PC-3 (cell line): ENCODE measurements at regions of chr20 and their contacts with region 1.

Region 1: DNA sequence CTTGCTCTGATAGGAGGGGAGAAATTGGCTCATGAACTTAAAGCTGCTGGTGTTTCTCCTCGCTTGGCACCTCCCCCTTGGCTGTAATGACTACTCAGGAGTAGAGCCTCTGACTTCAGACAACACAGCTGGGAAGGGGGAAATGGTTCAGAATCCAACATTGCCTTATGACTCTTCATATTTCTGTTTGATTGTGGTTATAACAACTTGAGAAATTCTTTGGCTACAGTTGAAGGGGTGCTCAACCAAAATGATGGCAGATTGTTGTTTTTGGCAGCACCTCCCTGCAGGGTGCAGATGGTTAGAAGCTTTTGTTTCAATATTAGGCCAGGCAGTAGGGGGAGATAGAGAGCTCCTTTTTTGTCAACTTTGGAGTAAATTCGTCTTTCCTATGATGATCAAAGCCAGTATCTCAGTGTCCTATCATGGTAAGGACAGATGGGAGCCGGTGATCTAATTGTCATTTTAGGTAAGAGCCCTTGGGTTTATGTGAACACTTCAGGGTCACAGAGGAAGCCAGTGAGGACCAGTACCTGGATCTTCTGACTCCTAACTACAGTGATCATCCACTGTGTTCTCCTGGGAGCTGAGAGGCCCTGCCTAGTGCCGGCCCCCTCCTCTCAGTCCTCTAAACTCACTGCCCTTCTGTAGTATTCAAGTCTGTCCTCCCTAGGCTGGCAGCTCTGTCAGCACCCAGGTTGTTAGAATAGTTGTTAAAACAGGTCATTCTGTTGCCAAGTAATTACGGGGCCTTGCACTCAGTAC is 39.9 kb downstream of the RPRD1B start:
- DNase-seq: peak; percentile 93
- ATAC-seq: peak; percentile 82
- H3K4me3 ChIP-seq: no peak overlapping the region
- H3K27ac ChIP-seq: 0 out of 2 replicates have a peak overlapping the region, but pooled peaks have one; percentile 7
- H3K4me1 ChIP-seq: peaks cover 37% of the 10 kb centered on the region
- H3K27me3 ChIP-seq: no peaks in the 10 kb centered on the region
- CTCF ChIP-seq: peak; percentile 93

Region 2: DNA sequence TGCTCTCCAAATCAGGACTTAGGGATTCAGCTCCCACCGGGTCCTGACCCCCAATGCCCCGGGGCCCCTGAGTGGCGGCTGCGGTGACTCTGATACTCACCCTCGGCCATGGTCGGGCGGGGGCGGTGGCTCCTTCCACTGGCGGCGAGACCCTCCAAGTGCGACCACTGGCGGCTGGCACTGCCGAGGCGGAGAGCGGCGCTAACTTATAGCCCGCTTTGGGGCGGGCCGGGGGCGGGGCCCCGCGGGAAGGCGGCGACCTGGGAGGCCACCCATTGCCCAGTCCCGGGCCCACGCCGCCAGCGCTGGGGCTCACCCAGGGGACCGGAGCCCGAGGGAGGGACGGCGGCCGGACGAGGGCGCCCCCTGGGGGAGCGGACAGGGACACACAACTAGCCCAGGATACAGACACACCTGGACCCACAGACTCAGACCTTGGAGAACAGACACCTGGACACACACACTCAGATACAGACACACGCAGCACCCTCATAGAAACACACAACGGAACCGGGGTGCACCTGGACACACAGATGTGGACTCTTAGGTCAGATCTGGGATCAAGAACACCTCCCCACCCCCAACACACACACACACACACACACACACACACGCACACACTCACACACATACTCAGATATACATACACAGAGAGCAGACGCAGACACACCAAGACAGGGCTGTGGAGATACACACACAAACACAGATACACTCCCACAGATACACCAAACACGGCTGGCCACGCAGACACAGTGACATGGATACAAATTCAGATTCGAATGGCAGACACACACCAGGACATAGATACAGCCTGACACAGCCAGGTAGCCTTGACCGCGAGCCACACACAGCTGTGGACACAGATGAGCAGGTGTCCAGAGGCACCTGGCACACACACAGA is 91.8 kb after region 1 on chr20 and contains the start of gene TGM2:
- CTCF ChIA-PET with region 1: interaction called, 3 read pairs
- POLR2A ChIA-PET with region 1: no interaction called
- intact Hi-C with region 1: loop called (anchors 1 kb)
- DNase-seq: peak; percentile 91
- ATAC-seq: peak; percentile 81
- H3K4me3 ChIP-seq: peak within 1 kb of the TSS; percentile 79
- H3K27ac ChIP-seq: peak within 1 kb of the TSS; percentile 72
- H3K4me1 ChIP-seq: peaks cover 73% of the 10 kb centered on the region
- H3K27me3 ChIP-seq: no peaks in the 10 kb centered on the region
- CTCF ChIP-seq: peak; percentile 87
- total RNA-seq, gene TGM2: 583 and 773 TPM in 2 replicates

Region 3: GRCh38 chr20:38221119-38221589 is 147.7 kb after region 1 on chr20:
- CTCF ChIA-PET with region 1: interaction called, 23 read pairs
- POLR2A ChIA-PET with region 1: no interaction called
- intact Hi-C with region 1: loop called (anchors 1 kb)
- DNase-seq: peak; percentile 92
- ATAC-seq: peak; percentile 72
- H3K4me3 ChIP-seq: peak overlapping the region; percentile 14; the same call in 1 of the 2 replicates
- H3K27ac ChIP-seq: peak overlapping the region; percentile 18; the same call in 1 of the 2 replicates
- H3K4me1 ChIP-seq: peaks cover 36% of the 10 kb centered on the region
- H3K27me3 ChIP-seq: no peaks in the 10 kb centered on the region
- CTCF ChIP-seq: peak; percentile 97